ENCODE measurements at regions of chrX and their contacts with region 1.

Region 1: DNA sequence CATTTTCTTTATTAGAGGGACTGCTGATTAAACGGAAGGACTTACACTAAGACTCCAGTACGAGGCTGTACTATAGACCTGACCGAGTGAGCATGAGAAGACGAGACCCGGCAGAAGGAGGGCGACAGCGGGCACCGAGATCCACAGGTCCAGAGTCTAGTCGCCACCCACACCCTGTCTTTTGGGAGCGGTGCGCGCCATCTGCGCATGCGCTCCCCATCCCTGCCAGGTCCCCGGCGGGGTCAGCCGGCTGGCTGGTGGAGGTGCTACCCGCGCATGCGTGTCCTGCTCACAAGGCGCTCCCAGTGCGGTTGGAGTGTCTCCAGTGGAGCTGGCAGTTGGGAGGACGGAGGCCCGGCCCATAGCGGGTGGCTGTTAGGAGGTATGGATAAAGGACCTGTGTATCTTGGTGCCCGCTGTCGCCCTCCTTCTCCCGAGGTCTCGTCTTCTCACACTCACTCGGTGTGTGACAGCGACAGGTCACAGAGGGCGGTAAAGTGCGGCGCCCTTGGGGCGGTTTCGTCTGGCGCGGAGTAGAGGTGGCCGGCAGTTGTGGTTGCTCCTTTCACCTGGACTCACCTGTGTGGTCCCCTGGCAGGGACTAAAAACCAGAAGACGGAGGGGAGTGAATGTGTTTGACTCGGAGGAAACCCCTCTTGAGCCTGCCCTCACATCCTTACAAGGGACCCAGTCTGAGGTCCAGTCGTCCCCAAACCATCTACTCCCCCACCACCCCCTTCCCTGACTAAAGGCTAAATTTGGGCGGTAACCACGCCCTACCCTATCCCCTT is 7.6 kb upstream of the HSD17B10 start:
- H3K4me3 ChIP-seq: peak overlapping the region; percentile 48
- H3K27ac ChIP-seq: peak overlapping the region; percentile 61; the same call in 1 of the 2 replicates
- H3K4me1 ChIP-seq: peaks cover 3% of the 10 kb centered on the region; the same call in 1 of the 2 replicates
- CTCF ChIP-seq: no peak

Region 2: GRCh38 chrX:52923781-52924241 is 517.9 kb before region 1 on chrX:
- CTCF ChIA-PET with region 1: no interaction called
- POLR2A ChIA-PET with region 1: no interaction called
- H3K4me3 ChIP-seq: no peak overlapping the region
- H3K27ac ChIP-seq: no peak overlapping the region
- H3K4me1 ChIP-seq: no peaks in the 10 kb centered on the region
- CTCF ChIP-seq: no peak

Region 3: GRCh38 chrX:53412446-53412845 is 29.3 kb before region 1 on chrX:
- CTCF ChIA-PET with region 1: interaction called, 29 read pairs
- POLR2A ChIA-PET with region 1: interaction called, 7 read pairs
- H3K4me3 ChIP-seq: no peak overlapping the region
- H3K27ac ChIP-seq: no peak overlapping the region
- H3K4me1 ChIP-seq: no peaks in the 10 kb centered on the region
- CTCF ChIP-seq: no peak

Region 4: GRCh38 chrX:53458082-53458481 is 16.4 kb after region 1 on chrX:
- CTCF ChIA-PET with region 1: interaction called, 17 read pairs
- POLR2A ChIA-PET with region 1: no interaction called
- H3K4me3 ChIP-seq: no peak overlapping the region
- H3K27ac ChIP-seq: no peak overlapping the region
- H3K4me1 ChIP-seq: no peaks in the 10 kb centered on the region
- CTCF ChIP-seq: peak; percentile 15; the same call in 1 of the 2 replicates

Region 5: GRCh38 chrX:53526999-53527398 is 85.3 kb after region 1 on chrX:
- CTCF ChIA-PET with region 1: no interaction called
- POLR2A ChIA-PET with region 1: no interaction called
- H3K4me3 ChIP-seq: no peak overlapping the region
- H3K27ac ChIP-seq: no peak overlapping the region
- H3K4me1 ChIP-seq: no peaks in the 10 kb centered on the region
- CTCF ChIP-seq: no peak

Region 6: GRCh38 chrX:53587795-53588420 is 146.2 kb after region 1 on chrX:
- CTCF ChIA-PET with region 1: no interaction called
- POLR2A ChIA-PET with region 1: no interaction called
- H3K4me3 ChIP-seq: no peak overlapping the region
- H3K27ac ChIP-seq: no peak overlapping the region
- H3K4me1 ChIP-seq: no peaks in the 10 kb centered on the region
- CTCF ChIP-seq: no peak

Region 7: DNA sequence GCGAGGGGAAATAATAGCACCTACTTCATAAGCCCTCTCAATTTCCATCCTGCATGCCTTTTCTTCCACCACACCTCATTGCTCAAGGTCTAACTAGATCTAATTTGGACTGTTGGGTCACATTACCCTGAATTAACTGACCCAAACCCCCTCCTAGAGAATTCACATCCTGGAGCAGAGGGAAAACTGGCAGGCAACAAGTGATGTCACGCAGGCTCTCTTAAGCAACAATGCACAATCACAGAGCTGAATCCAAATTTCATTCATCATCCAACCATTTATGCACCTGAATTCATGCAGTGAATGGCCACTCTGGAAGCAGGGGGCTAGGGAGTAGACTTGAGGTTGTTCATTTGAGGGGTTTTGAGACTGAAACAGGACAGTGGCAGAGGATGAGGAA is 352.5 kb after region 1 on chrX:
- CTCF ChIA-PET with region 1: no interaction called
- POLR2A ChIA-PET with region 1: no interaction called
- H3K4me3 ChIP-seq: no peak overlapping the region
- H3K27ac ChIP-seq: no peak overlapping the region
- H3K4me1 ChIP-seq: no peaks in the 10 kb centered on the region
- CTCF ChIP-seq: no peak

Measured in HEK293 (cell line).